GM10248 (cell line): ENCODE measurements at regions of chr10 and their contacts with region 1.

Region 1: GRCh38 chr10:103605359-103606095 is 112.0 kb downstream of the NEURL1 start:
- DNase-seq: peak; percentile 53
- CTCF ChIP-seq: peak; percentile 46

Region 2: DNA sequence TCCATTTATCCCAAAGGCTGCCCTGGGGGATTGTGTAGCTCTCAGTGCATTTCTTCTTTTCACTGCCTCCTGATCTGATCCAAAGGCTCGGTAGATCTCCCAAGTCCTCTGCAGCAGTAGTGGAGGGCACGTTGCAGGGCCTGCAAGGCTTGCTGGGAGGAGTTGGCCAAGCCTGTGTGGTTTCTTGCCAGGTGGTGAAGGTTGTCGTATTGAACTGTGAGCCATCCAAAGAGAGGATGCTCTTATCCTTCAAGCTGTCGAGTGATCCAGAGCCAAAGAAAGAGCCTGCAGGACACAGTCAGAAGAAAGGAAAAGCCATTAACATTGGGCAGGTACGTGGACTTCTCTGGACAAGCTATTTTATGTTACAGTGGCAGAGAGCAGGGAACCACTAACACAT is 187.9 kb before region 1 on chr10:
- CTCF ChIA-PET with region 1: no interaction called
- POLR2A ChIA-PET with region 1: no interaction called
- DNase-seq: no peak
- CTCF ChIP-seq: no peak

Region 3: DNA sequence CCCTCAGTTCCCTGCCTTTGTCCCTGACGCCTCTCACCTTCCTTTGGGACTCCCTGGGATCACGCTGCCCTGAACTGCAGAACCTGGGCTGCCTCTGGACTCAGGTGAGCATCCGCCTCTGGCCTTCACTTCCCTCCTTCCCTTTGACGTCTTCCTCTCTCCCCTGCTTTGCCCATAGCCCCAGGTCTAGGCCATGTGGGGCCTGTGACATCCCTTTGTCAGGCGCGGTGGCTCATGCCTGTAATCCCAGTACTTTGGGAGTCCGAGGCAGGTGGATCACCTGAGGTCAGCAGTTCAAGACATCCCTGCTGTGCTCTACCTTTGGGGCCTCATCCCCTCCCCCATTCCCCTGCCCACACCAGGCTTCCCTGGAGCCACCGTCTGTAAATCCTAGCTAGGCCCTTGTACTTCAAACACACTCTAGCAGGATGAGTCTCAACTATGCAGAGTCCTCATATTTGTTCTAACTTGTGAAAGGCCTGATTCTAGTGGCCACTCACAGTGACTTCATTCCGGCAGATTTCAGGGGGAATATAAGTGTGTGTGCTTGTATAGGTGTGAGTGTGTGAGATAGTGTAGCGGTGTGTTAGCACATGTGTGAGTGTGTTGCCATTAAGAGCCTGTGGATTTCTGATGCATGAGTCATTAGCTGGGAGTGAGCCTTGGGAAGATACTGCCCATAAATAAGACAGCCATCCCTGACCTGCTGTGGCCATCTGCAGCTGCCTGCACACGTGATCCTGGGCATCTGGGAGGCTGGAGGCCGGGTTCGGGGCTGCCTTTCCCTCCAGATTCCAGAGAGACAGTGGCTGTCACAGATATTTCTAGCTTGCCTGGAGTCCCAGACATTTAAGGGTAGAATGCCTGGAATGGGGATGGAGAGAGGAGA is 113.8 kb before region 1 on chr10:
- CTCF ChIA-PET with region 1: no interaction called
- POLR2A ChIA-PET with region 1: no interaction called
- DNase-seq: no peak
- CTCF ChIP-seq: no peak

Region 4: DNA sequence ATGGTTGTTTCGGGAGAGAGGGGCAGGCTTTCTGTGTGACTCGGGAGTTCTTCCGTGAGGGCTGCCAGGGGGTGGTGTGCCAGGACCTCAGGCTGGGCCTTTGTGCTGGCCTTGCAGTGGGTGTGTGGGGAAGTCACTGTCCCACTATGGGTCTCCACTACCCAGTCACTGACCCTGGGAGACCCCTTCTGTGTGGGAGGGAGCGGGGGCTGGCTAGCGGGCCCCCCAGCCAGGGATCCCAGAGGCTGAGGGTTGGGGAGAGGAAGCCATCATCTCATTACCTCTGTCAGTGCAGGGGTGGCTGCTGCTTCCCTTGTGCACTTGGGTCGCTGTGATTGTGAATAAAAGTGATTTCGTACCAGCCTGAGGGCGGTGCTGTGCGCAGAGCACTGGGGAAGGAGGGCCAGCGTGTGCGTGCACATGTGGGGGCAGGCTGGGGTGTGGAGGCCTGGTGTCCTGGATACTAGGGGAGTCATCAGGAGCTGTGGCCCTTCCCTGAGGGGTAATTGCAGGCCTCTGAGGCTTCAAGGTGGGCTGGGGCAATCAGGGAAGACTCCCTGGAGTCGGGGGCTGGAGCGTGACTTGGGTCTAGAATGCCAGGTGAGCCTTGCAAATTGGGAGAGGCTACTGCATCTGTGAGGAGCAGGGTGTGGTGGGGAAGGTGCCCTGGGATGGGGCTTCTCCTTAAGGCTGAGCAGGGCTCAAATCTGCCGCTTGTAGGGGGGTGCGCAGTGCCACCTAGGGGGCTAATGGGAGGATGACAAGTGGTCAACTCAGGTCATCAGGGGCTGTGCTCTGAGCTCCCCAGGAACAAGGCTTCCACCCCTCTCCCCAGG is 13.1 kb before region 1 on chr10:
- CTCF ChIA-PET with region 1: interaction called, 27 read pairs
- POLR2A ChIA-PET with region 1: no interaction called
- DNase-seq: peak; percentile 86
- CTCF ChIP-seq: peak; percentile 85

Region 5: DNA sequence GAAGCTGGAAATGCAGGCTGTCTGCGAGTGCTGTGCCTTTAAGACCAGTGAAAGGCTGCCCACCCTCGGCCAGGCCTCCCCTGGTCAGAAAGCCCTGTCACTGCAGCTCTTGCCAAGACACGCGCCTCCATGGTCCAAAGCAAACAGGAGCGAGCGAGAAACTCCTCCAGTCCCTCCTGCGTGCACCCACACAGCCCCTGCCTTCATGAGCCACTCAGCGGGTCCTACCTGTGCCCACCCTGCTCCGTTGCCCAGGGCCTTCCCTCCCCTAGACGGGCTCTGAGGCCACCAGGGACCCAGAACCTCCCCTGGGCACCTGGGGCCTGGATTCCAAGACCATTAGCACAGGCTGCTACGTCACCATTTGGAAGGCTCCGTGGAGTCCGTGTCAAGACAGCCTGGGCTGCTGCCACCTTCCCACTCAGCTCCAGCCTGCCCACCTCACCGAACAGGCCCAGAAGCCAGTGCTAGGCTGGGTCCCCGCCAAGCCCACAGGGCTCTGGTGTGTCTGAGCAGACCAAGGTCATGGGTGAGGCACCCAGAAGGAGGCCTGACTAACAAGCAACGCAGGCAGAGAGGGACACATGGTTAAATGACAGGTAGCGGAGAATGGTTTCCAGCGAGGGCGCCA is 32.5 kb after region 1 on chr10:
- CTCF ChIA-PET with region 1: interaction called, 11 read pairs
- POLR2A ChIA-PET with region 1: no interaction called
- DNase-seq: no peak
- CTCF ChIP-seq: no peak